ENCODE measurements at regions of chr17 and their contacts with region 1.

Region 1: GRCh38 chr17:43530278-43531081 is 15.7 kb downstream of the ETV4 start:
- DNase-seq: no peak
- H3K4me3 ChIP-seq: no peak overlapping the region
- H3K27ac ChIP-seq: no peak overlapping the region
- H3K4me1 ChIP-seq: peaks cover 29% of the 10 kb centered on the region
- H3K27me3 ChIP-seq: no peaks in the 10 kb centered on the region
- CTCF ChIP-seq: no peak

Region 2: GRCh38 chr17:43467981-43468581 is 62.4 kb before region 1 on chr17:
- CTCF ChIA-PET with region 1: no interaction called
- POLR2A ChIA-PET with region 1: no interaction called
- intact Hi-C with region 1: no loop called
- DNase-seq: no peak
- H3K4me3 ChIP-seq: no peak overlapping the region
- H3K27ac ChIP-seq: peak overlapping the region; percentile 81
- H3K4me1 ChIP-seq: peaks cover 29% of the 10 kb centered on the region
- H3K27me3 ChIP-seq: no peaks in the 10 kb centered on the region
- CTCF ChIP-seq: no peak

Region 3: DNA sequence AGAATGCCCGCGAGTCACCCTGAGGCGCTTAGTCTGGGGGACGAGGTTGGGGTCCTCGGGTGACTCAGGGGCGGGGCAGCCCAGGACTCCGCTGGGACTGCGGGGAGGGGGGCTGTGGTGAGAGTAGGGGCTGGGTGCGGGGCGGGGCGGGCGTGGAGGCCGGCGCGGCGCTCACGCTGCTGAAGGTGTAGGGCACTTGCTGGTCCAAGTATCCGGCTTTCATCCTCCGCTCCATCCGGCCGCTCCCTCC is 14.8 kb after region 1 on chr17:
- CTCF ChIA-PET with region 1: no interaction called
- POLR2A ChIA-PET with region 1: interaction called, 4 read pairs
- intact Hi-C with region 1: loop called (anchors 2 kb)
- DNase-seq: no peak
- H3K4me3 ChIP-seq: peak overlapping the region; percentile 85
- H3K27ac ChIP-seq: peak overlapping the region; percentile 94
- H3K4me1 ChIP-seq: peaks cover 35% of the 10 kb centered on the region
- H3K27me3 ChIP-seq: no peaks in the 10 kb centered on the region
- CTCF ChIP-seq: no peak

Region 4: GRCh38 chr17:43556292-43556691 is 25.8 kb after region 1 on chr17:
- CTCF ChIA-PET with region 1: no interaction called
- POLR2A ChIA-PET with region 1: no interaction called
- intact Hi-C with region 1: no loop called
- DNase-seq: peak; percentile 76 to 91
- H3K4me3 ChIP-seq: peak overlapping the region; percentile 30; the same call in 1 of the 2 replicates
- H3K27ac ChIP-seq: peak overlapping the region; percentile 81
- H3K4me1 ChIP-seq: peaks cover 25% of the 10 kb centered on the region
- H3K27me3 ChIP-seq: no peaks in the 10 kb centered on the region
- CTCF ChIP-seq: no peak